K562 (cell line): ENCODE measurements at regions of chr19 and their contacts with region 1.

Region 1: DNA sequence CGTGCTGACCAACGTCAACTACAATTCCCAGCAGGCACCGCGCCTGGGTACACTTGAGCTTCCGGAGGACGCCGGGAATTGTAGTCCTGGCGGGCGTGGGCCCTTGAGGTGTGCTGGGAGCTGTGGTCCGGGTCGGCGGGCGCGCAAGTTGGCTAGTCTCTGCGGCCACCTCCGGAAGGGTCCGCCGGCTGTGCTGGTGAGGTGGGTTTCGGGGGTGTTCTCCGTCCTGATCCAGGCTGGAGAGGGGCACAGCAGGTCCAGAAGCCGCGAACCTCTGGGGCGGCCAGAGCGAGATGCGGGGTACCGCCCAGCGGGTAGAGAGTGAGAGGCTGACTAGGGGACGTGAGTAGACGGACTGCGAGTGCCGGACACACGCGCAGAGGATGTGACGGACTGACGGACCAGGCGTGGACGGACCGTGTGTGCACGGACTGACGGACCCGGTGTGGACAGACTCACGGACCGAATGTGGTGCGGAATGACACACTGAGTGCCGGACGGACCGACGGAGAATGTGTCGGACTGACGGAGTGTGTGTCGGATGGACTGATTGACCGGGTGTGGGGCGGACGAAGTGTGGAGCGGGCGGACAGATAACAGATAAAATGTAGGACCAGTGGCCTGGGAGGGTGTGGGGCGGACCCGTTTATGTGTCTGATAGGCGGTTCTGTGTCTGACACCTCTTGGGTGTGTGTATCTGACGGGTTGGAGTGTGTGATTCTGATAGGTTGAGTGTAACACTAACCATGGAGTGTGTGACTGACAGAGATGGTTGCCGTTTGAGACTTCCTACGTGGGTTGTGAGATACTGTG is at the start of gene ZSCAN22:
- DNase-seq: peak; percentile 89 to 98 (median 92)
- ATAC-seq: peak; percentile 95
- H3K4me3 ChIP-seq: peak within 1 kb of the TSS; percentile 98
- H3K27ac ChIP-seq: peak within 1 kb of the TSS; percentile 94
- H3K4me1 ChIP-seq: peaks cover 20 to 25% of the 10 kb centered on the region in 2 experiments; a peak in 4 of 5 replicates
- H3K27me3 ChIP-seq: no peaks in the 10 kb centered on the region
- CTCF ChIP-seq: no peak
- EP300 ChIP-seq: peak; percentile 41
- POLR2A ChIP-seq: peak; percentile 96
- RAD21 ChIP-seq: peak; percentile 11 to 20; a peak in 1 of 4 replicates
- polyA plus RNA-seq, gene ZSCAN22: 0.98 to 1.9 TPM

Region 2: GRCh38 chr19:58182989-58183816 is 143.9 kb before region 1 on chr19 and contains the start of gene ZNF274:
- CTCF ChIA-PET with region 1: no interaction called
- POLR2A ChIA-PET with region 1: no interaction called
- in situ Hi-C with region 1: no loop called
- intact Hi-C with region 1: loop called (anchors 2 kb)
- DNase-seq: peak; percentile 84 to 96 (median 90)
- ATAC-seq: peak; percentile 93
- H3K4me3 ChIP-seq: peak within 1 kb of the TSS; percentile 74
- H3K27ac ChIP-seq: peak within 1 kb of the TSS; percentile 100
- H3K4me1 ChIP-seq: peaks cover 6 to 14% of the 10 kb centered on the region in 2 experiments; a peak in 4 of 5 replicates
- H3K27me3 ChIP-seq: no peaks in the 10 kb centered on the region
- CTCF ChIP-seq: no peak
- EP300 ChIP-seq: peak; percentile 33; the same call in 1 of the 2 replicates
- POLR2A ChIP-seq: peak; percentile 98
- RAD21 ChIP-seq: no peak
- polyA plus RNA-seq, gene ZNF274: 5.2 to 5.4 TPM

Region 3: GRCh38 chr19:58228585-58229254 is 98.4 kb before region 1 on chr19 and contains the start of gene ZNF544:
- CTCF ChIA-PET with region 1: no interaction called
- POLR2A ChIA-PET with region 1: interaction called, 3 read pairs
- in situ Hi-C with region 1: no loop called
- intact Hi-C with region 1: loop called (anchors 5 kb)
- DNase-seq: peak; percentile 78 to 84 (median 80)
- ATAC-seq: peak; percentile 96
- H3K4me3 ChIP-seq: peak within 1 kb of the TSS; percentile 56
- H3K27ac ChIP-seq: peak within 1 kb of the TSS; percentile 91
- H3K4me1 ChIP-seq: peaks cover 8 to 14% of the 10 kb centered on the region in 2 experiments; a peak in 4 of 5 replicates
- H3K27me3 ChIP-seq: no peaks in the 10 kb centered on the region; a peak in 1 of 5 replicates
- CTCF ChIP-seq: peak in 2 of 3 experiments; percentile 2 to 29; a peak in 1 of 6 replicates
- EP300 ChIP-seq: peak; percentile 58; the same call in 1 of the 2 replicates
- POLR2A ChIP-seq: peak; percentile 95
- RAD21 ChIP-seq: no peak
- polyA plus RNA-seq, gene ZNF544: 23.6 to 28.6 TPM

Region 4: DNA sequence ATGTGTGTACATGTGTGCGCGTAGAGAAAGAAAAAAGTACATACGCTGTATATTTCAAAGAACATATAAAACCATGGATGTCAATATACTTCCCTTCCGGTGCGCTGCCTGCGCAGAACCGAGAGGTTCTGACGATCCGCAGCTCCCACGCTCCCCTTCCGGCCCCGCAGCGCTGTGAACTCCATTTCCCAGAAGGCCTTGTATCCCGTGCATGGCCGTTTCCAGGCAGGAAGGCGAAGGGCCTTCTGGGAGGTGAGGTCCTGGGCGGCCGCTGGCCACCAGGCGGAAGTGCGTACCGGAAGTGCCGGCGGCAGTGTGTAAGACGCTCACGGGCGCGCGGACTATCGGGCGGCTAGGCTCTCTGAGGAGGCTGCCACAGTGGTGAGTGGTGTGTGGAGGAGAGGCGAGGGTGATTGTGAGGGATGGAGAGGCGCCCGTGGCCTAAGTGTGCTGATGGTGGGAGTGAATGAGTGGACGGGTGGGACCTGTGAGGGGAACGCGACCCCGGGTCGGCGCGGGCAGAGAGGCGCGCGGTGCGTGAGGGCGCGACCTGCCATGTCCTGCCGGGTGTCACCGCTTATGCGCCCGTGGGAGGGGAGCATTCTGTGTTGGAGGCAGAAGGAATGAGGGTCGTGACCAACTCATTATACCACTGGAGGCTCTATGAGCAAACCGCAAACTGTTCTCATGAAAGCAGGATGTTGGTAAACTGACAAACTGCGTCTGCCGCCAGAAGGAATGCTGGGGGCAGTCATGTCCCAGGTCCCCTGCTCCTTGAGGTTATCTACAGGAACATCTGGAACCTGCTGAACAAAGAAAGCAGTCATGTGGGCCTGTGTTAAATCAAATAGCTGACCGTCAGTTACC is 21.8 kb before region 1 on chr19 and contains the start of gene ERVK3-1:
- CTCF ChIA-PET with region 1: no interaction called
- POLR2A ChIA-PET with region 1: interaction called, 9 read pairs
- in situ Hi-C with region 1: no loop called
- intact Hi-C with region 1: loop called (anchors 1 kb)
- DNase-seq: peak; percentile 90 to 99 (median 92)
- ATAC-seq: peak; percentile 98
- H3K4me3 ChIP-seq: peak within 1 kb of the TSS; percentile 98
- H3K27ac ChIP-seq: peak within 1 kb of the TSS; percentile 98
- H3K4me1 ChIP-seq: peaks cover 7 to 15% of the 10 kb centered on the region in 2 experiments; a peak in 4 of 5 replicates
- H3K27me3 ChIP-seq: no peaks in the 10 kb centered on the region
- CTCF ChIP-seq: no peak
- EP300 ChIP-seq: no peak
- POLR2A ChIP-seq: peak; percentile 99
- RAD21 ChIP-seq: 0 out of 4 replicates have a peak, but pooled peaks of 1 of the 2 experiments have one; percentile 10
- polyA plus RNA-seq, gene ERVK3-1: 261 to 299 TPM

Region 5: GRCh38 chr19:58380722-58381466 is 53.8 kb after region 1 on chr19 and contains the start of gene ZNF837:
- CTCF ChIA-PET with region 1: no interaction called
- POLR2A ChIA-PET with region 1: interaction called, 4 read pairs
- in situ Hi-C with region 1: no loop called
- intact Hi-C with region 1: loop called (anchors 1 kb)
- DNase-seq: peak; percentile 89 to 100 (median 94)
- ATAC-seq: peak; percentile 93
- H3K4me3 ChIP-seq: peak within 1 kb of the TSS; percentile 61
- H3K27ac ChIP-seq: peak within 1 kb of the TSS; percentile 88
- H3K4me1 ChIP-seq: peaks cover 20 to 47% of the 10 kb centered on the region in 2 experiments
- H3K27me3 ChIP-seq: no peaks in the 10 kb centered on the region
- CTCF ChIP-seq: no peak
- EP300 ChIP-seq: no peak
- POLR2A ChIP-seq: peak; percentile 96
- RAD21 ChIP-seq: peak in 1 of 2 experiments; percentile 31; a peak in 2 of 4 replicates
- polyA plus RNA-seq, gene ZNF837: not detected

Region 6: DNA sequence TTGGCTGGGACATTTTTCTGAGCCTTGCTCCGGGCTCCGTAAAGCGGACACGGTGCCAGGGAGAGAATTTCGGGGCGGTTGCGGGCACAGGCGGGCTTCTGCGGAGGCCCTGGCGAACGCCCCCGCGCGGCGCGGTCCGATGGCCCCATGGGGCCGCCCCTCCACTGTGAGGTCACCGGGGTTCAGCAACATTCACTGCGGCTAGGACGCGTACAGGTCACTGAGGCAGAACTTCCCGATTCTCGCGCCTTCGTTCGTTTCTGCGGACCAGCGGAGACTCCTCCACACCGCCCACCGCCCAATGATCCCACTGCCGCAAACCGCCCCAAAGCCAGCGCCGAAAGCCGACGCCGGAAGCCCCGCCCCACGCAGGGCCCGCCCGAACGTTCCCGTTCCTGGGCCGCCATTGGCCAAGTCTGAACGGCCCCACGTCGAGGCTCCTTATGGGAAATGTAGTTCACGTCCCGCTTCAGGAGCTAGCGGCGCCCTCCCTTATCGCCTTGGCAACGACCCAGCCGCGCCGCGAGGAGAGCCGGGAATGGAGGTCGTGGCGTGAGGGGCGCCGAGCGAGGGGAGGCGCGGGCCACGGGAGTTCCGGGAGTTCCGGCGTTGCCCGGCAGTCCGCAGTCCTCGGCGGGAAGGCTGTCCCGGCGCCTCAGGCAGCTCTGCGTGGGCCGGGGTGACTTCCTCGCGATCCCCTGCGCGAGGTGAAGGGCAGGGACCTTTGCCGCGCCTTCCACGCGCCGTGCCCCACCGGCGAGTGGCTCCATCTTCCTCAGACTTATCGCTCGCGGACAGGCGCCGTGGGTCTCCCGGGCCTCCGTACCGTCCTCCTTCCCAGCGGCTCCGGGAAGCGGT is 81.3 kb after region 1 on chr19 and contains the start of gene ZNF584:
- CTCF ChIA-PET with region 1: no interaction called
- POLR2A ChIA-PET with region 1: interaction called, 3 read pairs
- in situ Hi-C with region 1: no loop called
- intact Hi-C with region 1: loop called (anchors 5 kb)
- DNase-seq: peak; percentile 92 to 98 (median 95)
- ATAC-seq: peak; percentile 94
- H3K4me3 ChIP-seq: peak within 1 kb of the TSS; percentile 87
- H3K27ac ChIP-seq: peak within 1 kb of the TSS; percentile 97
- H3K4me1 ChIP-seq: peaks cover 18 to 39% of the 10 kb centered on the region in 2 experiments
- H3K27me3 ChIP-seq: no peaks in the 10 kb centered on the region
- CTCF ChIP-seq: peak in 1 of 3 experiments; percentile 32; a peak in 3 of 6 replicates
- EP300 ChIP-seq: peak; percentile 26; the same call in 1 of the 2 replicates
- POLR2A ChIP-seq: peak; percentile 96
- RAD21 ChIP-seq: peak in 1 of 2 experiments; percentile 21; a peak in 2 of 4 replicates
- polyA plus RNA-seq, gene ZNF584: 5.8 to 7.1 TPM

Region 7: GRCh38 chr19:58475714-58476497 is 148.8 kb after region 1 on chr19 and contains the start of gene ZNF446:
- CTCF ChIA-PET with region 1: no interaction called
- POLR2A ChIA-PET with region 1: no interaction called
- in situ Hi-C with region 1: no loop called
- intact Hi-C with region 1: loop called (anchors 5 kb)
- DNase-seq: peak; percentile 91 to 99 (median 94)
- ATAC-seq: peak; percentile 91
- H3K4me3 ChIP-seq: peak within 1 kb of the TSS; percentile 59
- H3K27ac ChIP-seq: peak within 1 kb of the TSS; percentile 92
- H3K4me1 ChIP-seq: peaks cover 26 to 52% of the 10 kb centered on the region in 2 experiments
- H3K27me3 ChIP-seq: no peaks in the 10 kb centered on the region
- CTCF ChIP-seq: peak in 2 of 3 experiments; percentile 21 to 33; a peak in 1 of 6 replicates
- EP300 ChIP-seq: peak; percentile 7; the same call in 1 of the 2 replicates
- POLR2A ChIP-seq: peak; percentile 79
- RAD21 ChIP-seq: no peak; a peak in 1 of 4 replicates
- polyA plus RNA-seq, gene ZNF446: 0.07 to 0.17 TPM